ENCODE measurements at regions of chr17 and their contacts with region 1.

Region 1: GRCh38 chr17:31842183-31843069 is 16.6 kb downstream of the COPRS start:
- DNase-seq: peak; percentile 46 to 51
- ATAC-seq: peak; percentile 87 to 89
- H3K4me3 ChIP-seq: peak overlapping the region; percentile 11 to 33 (median 22)
- H3K27ac ChIP-seq: peak overlapping the region in 3 of 4 donors; percentile 0 to 14 (median 8)
- H3K4me1 ChIP-seq: peaks cover 12 to 13% of the 10 kb centered on the region in 2 donors
- H3K27me3 ChIP-seq: no peaks in the 10 kb centered on the region
- CTCF ChIP-seq: peak; percentile 93 to 98 (median 96)
- POLR2A ChIP-seq: no peak

Region 2: GRCh38 chr17:31425282-31426040 is 417.0 kb before region 1 on chr17:
- in situ Hi-C with region 1: loop called in 3 of 4 experiments (anchors 25 kb)
- intact Hi-C with region 1: no loop called
- DNase-seq: no peak
- ATAC-seq: no peak
- H3K4me3 ChIP-seq: no peak overlapping the region
- H3K27ac ChIP-seq: no peak overlapping the region
- H3K4me1 ChIP-seq: no peaks in the 10 kb centered on the region
- H3K27me3 ChIP-seq: peaks cover 0 to 4% (median 0%) of the 10 kb centered on the region in 3 donors
- CTCF ChIP-seq: no peak
- POLR2A ChIP-seq: no peak

Region 3: GRCh38 chr17:31437720-31438420 is 404.6 kb before region 1 on chr17:
- in situ Hi-C with region 1: loop called in 3 of 4 experiments (anchors 25 kb)
- intact Hi-C with region 1: loop called (anchors 5 kb)
- DNase-seq: no peak
- ATAC-seq: no peak
- H3K4me3 ChIP-seq: no peak overlapping the region
- H3K27ac ChIP-seq: no peak overlapping the region
- H3K4me1 ChIP-seq: no peaks in the 10 kb centered on the region
- H3K27me3 ChIP-seq: peaks cover 0 to 2% (median 0%) of the 10 kb centered on the region in 3 donors
- CTCF ChIP-seq: no peak
- POLR2A ChIP-seq: no peak

Region 4: DNA sequence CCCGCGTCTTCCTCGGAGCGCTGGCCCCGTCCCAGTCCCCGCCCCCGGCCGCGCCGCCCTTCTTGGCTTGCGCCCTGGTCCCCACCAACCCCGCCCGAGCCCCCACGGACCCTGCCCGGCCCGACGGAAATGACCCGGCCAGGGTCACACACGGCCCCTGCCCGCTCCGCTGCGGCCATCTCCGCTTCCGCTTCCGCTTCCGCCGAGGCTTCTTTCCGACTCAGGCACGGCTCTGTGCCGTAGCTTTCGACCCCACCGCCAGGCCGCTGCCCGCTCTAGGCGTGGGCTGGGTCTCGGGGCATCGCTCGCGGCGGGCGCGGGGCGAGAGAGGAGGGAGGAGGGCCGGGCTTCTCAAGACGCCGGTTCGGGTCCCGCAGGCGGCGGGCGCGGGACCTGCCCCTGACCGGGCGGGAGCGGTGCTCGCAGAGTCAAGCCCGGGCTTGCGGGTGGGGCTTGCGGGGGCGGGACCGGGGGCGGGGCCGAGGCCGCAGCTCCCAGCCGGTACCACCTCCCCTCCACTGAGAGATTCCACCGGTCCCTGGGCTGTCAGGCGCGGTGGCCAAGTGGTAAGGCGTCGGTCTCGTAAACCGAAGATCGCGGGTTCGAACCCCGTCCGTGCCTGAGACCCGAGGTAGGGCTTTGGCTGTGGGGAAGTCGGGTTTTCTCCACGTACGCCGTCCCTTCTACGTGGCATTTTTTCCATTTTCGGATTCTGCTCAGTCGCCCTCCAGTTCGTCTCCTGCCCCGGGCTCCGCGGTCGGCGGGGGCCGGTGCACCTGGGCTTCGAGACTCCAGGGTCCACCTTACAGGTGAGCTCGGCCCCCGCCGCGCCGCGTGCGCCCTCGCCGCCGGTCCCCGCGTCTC is 292.7 kb before region 1 on chr17:
- in situ Hi-C with region 1: loop called in 1 of 4 experiments (anchors 5 kb)
- intact Hi-C with region 1: no loop called
- DNase-seq: peak; percentile 83 to 85
- ATAC-seq: peak; percentile 92 to 93
- H3K4me3 ChIP-seq: peak overlapping the region; percentile 83 to 99 (median 94)
- H3K27ac ChIP-seq: peak overlapping the region; percentile 86 to 92 (median 91)
- H3K4me1 ChIP-seq: peaks cover 2 to 5% of the 10 kb centered on the region in 2 donors
- H3K27me3 ChIP-seq: no peaks in the 10 kb centered on the region
- CTCF ChIP-seq: no peak
- POLR2A ChIP-seq: peak; percentile 69 to 72

Region 5: GRCh38 chr17:31558748-31559644 is 283.4 kb before region 1 on chr17:
- in situ Hi-C with region 1: loop called (anchors 5 kb)
- intact Hi-C with region 1: loop called (anchors 1 kb)
- DNase-seq: peak; percentile 59 to 70
- ATAC-seq: peak; percentile 93
- H3K4me3 ChIP-seq: peak overlapping the region; percentile 56 to 76 (median 68)
- H3K27ac ChIP-seq: peak overlapping the region; percentile 55 to 86 (median 78)
- H3K4me1 ChIP-seq: peaks cover 0 to 6% of the 10 kb centered on the region in 2 donors
- H3K27me3 ChIP-seq: peaks cover 0 to 6% (median 0%) of the 10 kb centered on the region in 3 donors
- CTCF ChIP-seq: peak; percentile 72 to 99 (median 94)
- POLR2A ChIP-seq: peak; percentile 48 to 60

Region 6: DNA sequence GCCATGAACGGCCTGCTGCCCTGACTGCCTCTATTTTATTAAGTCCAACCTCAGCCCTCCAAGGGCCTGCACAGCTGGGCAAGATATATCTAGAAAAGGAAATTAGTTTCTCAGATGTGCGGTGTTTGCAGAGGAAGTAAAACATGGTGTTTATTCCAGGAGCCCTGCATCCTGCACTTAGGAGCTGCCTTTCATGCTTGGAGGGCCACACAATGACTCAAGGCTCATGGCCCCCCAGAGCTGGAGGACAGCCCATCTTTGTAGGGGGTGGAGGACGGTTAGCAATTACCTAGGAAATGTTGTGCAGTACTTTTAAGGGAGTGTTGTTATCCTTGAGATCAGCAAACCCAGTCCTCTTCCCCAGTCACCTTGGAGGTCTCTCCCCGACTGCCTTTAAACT is 63.9 kb before region 1 on chr17:
- in situ Hi-C with region 1: no loop called
- intact Hi-C with region 1: no loop called
- DNase-seq: no peak
- ATAC-seq: no peak
- H3K4me3 ChIP-seq: no peak overlapping the region
- H3K27ac ChIP-seq: no peak overlapping the region
- H3K4me1 ChIP-seq: no peaks in the 10 kb centered on the region
- H3K27me3 ChIP-seq: no peaks in the 10 kb centered on the region
- CTCF ChIP-seq: no peak
- POLR2A ChIP-seq: no peak

Measured in gastrocnemius medialis (tissue), 4 donors.